T-cell (primary cell): ENCODE measurements at regions of chr12 and their contacts with region 1.

Region 1: GRCh38 chr12:75790219-75790618 is 241.4 kb downstream of the PHLDA1 start:
- DNase-seq: no peak
- ATAC-seq: no peak
- H3K4me3 ChIP-seq: no peak overlapping the region
- H3K4me3 Mint-ChIP-seq: no peak overlapping the region
- H3K27ac ChIP-seq: no peak overlapping the region
- H3K27ac Mint-ChIP-seq: no peak overlapping the region
- H3K4me1 ChIP-seq: no peaks in the 10 kb centered on the region
- H3K4me1 Mint-ChIP-seq: no peaks in the 10 kb centered on the region
- H3K27me3 ChIP-seq: no peaks in the 10 kb centered on the region
- H3K27me3 Mint-ChIP-seq: peaks cover 0 to 4% of the 10 kb centered on the region in 2 donors

Region 2: GRCh38 chr12:76008428-76008827 is 218.2 kb after region 1 on chr12:
- CTCF ChIA-PET with region 1: interaction called in 1 of 2 experiments, 10 read pairs
- POLR2A ChIA-PET with region 1: no interaction called
- DNase-seq: no peak
- ATAC-seq: no peak
- H3K4me3 ChIP-seq: no peak overlapping the region
- H3K4me3 Mint-ChIP-seq: no peak overlapping the region
- H3K27ac ChIP-seq: no peak overlapping the region
- H3K27ac Mint-ChIP-seq: no peak overlapping the region
- H3K4me1 ChIP-seq: no peaks in the 10 kb centered on the region
- H3K4me1 Mint-ChIP-seq: no peaks in the 10 kb centered on the region
- H3K27me3 ChIP-seq: no peaks in the 10 kb centered on the region
- H3K27me3 Mint-ChIP-seq: no peaks in the 10 kb centered on the region